ENCODE measurements at regions of chr12 and their contacts with region 1.

Region 1: DNA sequence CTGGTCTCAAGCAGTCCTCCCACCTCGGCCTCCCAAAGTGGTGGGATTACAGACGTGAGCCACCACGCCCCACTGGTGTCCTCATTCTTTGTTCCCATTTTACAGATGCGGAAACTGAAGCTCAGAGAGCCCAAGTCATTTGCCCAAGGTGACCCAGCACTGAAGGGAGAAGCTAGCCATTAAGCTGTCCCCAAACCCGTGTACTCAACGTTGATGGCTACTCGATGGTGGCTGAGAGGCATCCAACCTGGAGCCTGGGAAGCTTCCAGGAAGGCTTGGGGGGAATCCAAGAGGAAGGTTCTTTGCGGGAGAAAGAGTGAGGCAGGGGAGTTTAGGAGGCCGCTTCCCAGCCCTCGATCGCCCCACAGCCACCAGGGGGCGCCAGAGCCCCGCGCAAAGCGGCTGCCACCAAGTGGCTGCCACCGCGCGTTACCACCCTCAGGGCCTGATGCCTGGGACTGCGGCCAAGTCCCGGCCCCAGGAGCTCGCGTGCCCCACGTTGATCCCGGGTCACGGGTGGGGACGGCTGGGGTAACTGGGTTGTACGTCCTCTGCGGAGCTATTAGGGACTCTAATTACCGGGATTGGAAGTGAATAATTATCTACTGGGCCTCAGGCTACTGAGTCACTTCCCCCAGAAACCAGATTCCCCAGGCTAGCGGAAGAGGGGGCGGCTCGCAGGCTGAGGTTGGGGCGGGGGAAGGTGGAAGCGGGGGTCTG is 8.8 kb upstream of the SH2B3 start:
- DNase-seq: peak; percentile 94
- ATAC-seq: peak; percentile 82
- H3K4me3 Mint-ChIP-seq: peak overlapping the region; percentile 61
- H3K27ac Mint-ChIP-seq: peak overlapping the region; percentile 70
- H3K4me1 Mint-ChIP-seq: peaks cover 28% of the 10 kb centered on the region
- H3K27me3 Mint-ChIP-seq: peaks cover 5% of the 10 kb centered on the region

Region 2: DNA sequence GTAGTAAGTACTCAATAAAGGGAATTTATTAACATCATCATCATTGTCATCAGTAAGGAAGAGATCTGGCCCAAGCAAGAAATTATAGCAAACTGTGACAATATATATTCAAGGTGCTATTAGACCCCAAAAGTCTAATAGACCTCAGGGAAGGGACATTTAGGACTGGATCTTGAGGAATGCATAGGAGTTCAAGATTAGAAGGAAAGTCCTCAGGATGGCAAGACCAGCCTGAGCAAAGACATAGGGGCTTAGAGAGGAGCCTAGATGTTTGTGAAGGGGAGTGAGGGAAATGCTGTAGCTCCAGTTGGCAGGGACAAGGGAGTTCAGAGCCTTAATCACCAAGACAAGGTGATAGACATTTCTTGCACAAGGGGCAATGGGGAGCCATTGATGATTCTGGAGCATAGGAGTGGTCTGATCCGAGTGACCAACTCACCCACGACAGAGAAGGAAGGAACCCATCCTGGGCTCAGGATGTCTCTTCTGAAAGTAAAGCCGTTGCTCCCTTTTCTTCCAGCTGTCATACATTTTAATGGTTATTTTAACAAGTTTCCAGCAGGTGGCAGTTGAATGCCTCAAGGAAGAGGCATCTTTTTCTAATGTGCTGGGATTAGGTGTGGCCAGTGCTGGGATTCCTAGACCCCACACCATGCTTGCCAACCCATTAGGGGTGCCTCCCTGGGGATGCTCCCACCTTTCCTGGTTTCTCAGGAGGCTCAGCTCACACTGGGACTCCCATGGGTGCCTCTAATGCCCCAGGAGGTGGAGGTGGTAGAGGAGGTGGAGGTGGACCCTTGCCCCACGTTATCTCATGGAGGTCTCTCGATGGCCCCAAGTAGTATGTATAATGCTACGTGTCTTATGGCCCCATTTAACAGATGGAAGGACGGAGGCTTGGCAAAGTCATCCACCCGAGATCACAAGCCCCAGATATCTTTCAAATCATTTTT is 65.8 kb before region 1 on chr12:
- CTCF ChIA-PET with region 1: interaction called, 6 read pairs
- POLR2A ChIA-PET with region 1: no interaction called
- intact Hi-C with region 1: loop called in 1 of 2 experiments (anchors 5 kb)
- DNase-seq: no peak
- ATAC-seq: no peak
- H3K4me3 Mint-ChIP-seq: no peak overlapping the region
- H3K27ac Mint-ChIP-seq: no peak overlapping the region
- H3K4me1 Mint-ChIP-seq: no peaks in the 10 kb centered on the region
- H3K27me3 Mint-ChIP-seq: no peaks in the 10 kb centered on the region

Region 3: GRCh38 chr12:111424793-111425251 is 27.9 kb after region 1 on chr12:
- CTCF ChIA-PET with region 1: interaction called, 21 read pairs
- POLR2A ChIA-PET with region 1: no interaction called
- intact Hi-C with region 1: no loop called
- DNase-seq: peak; percentile 42
- ATAC-seq: peak; percentile 24
- H3K4me3 Mint-ChIP-seq: no peak overlapping the region
- H3K27ac Mint-ChIP-seq: peak overlapping the region; percentile 44
- H3K4me1 Mint-ChIP-seq: peaks cover 61% of the 10 kb centered on the region
- H3K27me3 Mint-ChIP-seq: no peaks in the 10 kb centered on the region

Region 4: DNA sequence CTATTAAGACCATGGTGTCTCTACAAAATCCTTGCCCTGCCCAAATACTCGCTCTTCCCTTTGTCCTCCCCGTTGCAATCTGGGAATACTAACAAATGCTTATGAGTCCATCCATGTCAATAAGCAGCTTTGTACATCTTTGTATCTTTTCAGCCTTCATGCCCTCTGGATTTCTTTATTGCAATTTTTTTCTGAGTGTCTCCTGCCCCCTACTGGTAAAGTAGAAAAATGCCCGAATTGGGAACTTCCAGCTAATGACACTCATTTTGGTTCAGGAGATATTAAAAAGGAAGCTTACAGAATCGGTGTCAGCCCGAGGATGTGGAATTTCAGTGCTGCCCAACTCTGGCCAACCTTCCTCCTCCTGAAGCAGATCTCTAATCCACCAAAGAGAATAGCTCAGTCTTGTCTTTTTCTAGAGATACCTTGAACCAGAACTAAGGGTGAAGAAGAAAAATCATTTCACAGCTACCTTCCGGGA is 54.8 kb after region 1 on chr12:
- CTCF ChIA-PET with region 1: interaction called, 890 read pairs
- POLR2A ChIA-PET with region 1: interaction called, 3 read pairs
- intact Hi-C with region 1: loop called (anchors 1 kb)
- DNase-seq: no peak
- ATAC-seq: peak; percentile 40
- H3K4me3 Mint-ChIP-seq: no peak overlapping the region
- H3K27ac Mint-ChIP-seq: no peak overlapping the region
- H3K4me1 Mint-ChIP-seq: peaks cover 16% of the 10 kb centered on the region
- H3K27me3 Mint-ChIP-seq: no peaks in the 10 kb centered on the region

Region 5: GRCh38 chr12:111529424-111530368 is 132.8 kb after region 1 on chr12:
- CTCF ChIA-PET with region 1: interaction called, 71 read pairs
- POLR2A ChIA-PET with region 1: no interaction called
- intact Hi-C with region 1: loop called (anchors 1 kb)
- DNase-seq: peak; percentile 78
- ATAC-seq: peak; percentile 90
- H3K4me3 Mint-ChIP-seq: no peak overlapping the region
- H3K27ac Mint-ChIP-seq: peak overlapping the region; percentile 10
- H3K4me1 Mint-ChIP-seq: peaks cover 13% of the 10 kb centered on the region
- H3K27me3 Mint-ChIP-seq: no peaks in the 10 kb centered on the region

Region 6: DNA sequence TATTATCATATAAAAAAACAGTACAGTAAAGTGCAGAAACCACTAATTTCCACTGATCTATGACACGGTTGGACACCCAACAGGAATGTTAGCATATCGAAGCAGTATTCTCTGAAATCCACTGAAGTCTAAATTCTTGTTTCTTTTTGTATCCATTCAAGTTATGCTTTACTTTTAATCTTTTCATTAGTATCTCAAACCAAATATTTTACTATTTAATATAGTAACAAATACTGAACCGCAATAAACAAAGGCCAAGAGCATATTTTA is 161.2 kb after region 1 on chr12:
- CTCF ChIA-PET with region 1: no interaction called
- POLR2A ChIA-PET with region 1: no interaction called
- intact Hi-C with region 1: no loop called
- DNase-seq: no peak
- ATAC-seq: no peak
- H3K4me3 Mint-ChIP-seq: no peak overlapping the region
- H3K27ac Mint-ChIP-seq: no peak overlapping the region
- H3K4me1 Mint-ChIP-seq: peaks cover 26% of the 10 kb centered on the region
- H3K27me3 Mint-ChIP-seq: no peaks in the 10 kb centered on the region

Region 7: GRCh38 chr12:111636209-111636945 is 239.5 kb after region 1 on chr12:
- CTCF ChIA-PET with region 1: no interaction called
- POLR2A ChIA-PET with region 1: no interaction called
- intact Hi-C with region 1: no loop called
- DNase-seq: no peak
- ATAC-seq: no peak
- H3K4me3 Mint-ChIP-seq: no peak overlapping the region
- H3K27ac Mint-ChIP-seq: no peak overlapping the region
- H3K4me1 Mint-ChIP-seq: no peaks in the 10 kb centered on the region
- H3K27me3 Mint-ChIP-seq: no peaks in the 10 kb centered on the region

Region 8: DNA sequence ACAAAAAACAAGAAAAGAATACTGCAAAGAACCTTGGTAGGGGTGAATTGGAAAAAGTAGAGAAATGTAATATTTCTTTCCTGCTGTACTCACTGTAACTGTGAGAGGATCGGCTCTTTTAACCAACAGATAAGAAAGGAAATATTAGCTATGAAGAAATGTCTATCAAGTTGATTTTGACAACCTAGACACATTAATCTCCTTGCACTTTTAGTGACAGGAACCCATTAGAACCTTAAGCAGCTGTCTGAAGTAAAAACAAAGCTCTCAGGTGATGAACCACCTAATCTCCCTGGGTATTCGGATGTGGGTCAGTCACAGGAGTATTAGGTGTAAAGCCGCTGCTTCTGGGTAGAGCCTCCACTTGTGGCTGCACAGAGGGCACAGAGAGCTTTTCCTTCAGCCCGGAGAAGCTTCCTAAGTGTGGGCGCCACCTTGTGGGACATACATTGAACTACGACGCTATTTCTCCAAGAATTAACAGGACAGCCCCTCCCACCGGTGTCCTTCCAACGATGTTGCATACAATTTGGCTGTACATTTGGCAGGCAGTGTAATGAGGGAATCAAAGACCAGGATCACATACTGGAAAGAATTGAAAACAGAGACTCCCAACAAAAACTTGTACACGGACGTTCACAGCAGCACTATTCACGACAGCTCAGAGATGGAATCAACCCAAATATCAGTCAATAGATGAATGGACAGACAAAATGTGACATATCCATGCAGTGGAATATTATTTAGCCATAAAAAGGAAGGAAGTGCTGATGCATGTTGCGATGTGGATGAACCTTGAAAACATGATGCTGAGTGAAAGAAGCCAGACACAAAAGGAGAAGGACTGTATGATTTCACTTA is 416.2 kb after region 1 on chr12:
- CTCF ChIA-PET with region 1: interaction called, 8 read pairs
- POLR2A ChIA-PET with region 1: no interaction called
- intact Hi-C with region 1: loop called (anchors 1 to 2 kb)
- DNase-seq: peak; percentile 81
- ATAC-seq: peak; percentile 98
- H3K4me3 Mint-ChIP-seq: no peak overlapping the region
- H3K27ac Mint-ChIP-seq: no peak overlapping the region
- H3K4me1 Mint-ChIP-seq: peaks cover 2% of the 10 kb centered on the region
- H3K27me3 Mint-ChIP-seq: no peaks in the 10 kb centered on the region

Measured in activated CD4-positive, alpha-beta T cell treated with anti-CD3 and anti-CD28 coated beads for 36 hours (primary cell).